ENCODE measurements at regions of chr3 and their contacts with region 1.

Region 1: GRCh38 chr3:197749601-197750395 is at the start of gene FYTTD1:
- DNase-seq: peak; percentile 85
- H3K4me3 Mint-ChIP-seq: peak within 1 kb of the TSS; percentile 97
- H3K27ac Mint-ChIP-seq: peak within 1 kb of the TSS; percentile 95
- H3K4me1 Mint-ChIP-seq: peaks cover 44% of the 10 kb centered on the region
- H3K27me3 Mint-ChIP-seq: peaks cover 13% of the 10 kb centered on the region
- total RNA-seq, gene FYTTD1: 59.0 and 77.2 TPM in 2 replicates

Region 2: GRCh38 chr3:197260491-197261163 is 489.2 kb before region 1 on chr3:
- intact Hi-C with region 1: no loop called
- DNase-seq: no peak
- H3K4me3 Mint-ChIP-seq: no peak overlapping the region
- H3K27ac Mint-ChIP-seq: no peak overlapping the region
- H3K4me1 Mint-ChIP-seq: peaks cover 14% of the 10 kb centered on the region
- H3K27me3 Mint-ChIP-seq: no peaks in the 10 kb centered on the region

Region 3: DNA sequence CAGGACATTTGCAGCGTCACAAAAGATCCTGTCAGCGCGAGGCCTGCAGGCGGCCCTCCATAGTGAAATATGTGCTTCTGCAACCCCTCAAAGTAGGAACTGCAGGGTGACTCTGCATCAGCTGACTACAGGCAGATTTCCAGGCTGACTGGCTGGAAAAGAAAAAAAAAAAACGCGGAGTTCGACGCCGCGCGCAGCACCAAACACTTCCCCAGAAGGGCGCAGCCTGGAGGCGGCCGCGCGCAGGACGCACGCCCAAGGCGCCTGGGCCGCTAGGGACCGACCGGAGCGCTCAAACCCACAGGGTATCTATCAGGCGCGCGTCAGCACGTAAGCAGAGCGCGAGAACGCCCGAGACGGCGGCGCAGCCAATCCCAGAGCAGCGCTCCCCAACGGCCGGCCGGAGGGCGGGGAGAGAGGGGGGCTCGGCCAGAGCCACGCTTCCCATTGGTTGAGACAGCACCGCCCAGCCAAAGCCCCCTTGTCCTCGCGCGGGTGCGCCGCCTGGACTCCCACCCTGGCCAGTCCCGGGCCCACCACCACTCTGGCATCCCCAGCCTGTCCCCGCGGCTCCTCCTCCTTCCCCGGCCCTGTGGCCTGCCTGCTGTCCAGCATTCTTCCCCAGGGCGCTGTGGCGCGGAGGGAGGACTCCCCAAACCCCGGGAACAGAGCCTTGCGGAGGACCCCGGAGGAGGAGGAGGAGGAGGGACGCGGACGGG is 195.1 kb before region 1 on chr3:
- intact Hi-C with region 1: loop called (anchors 1 kb)
- DNase-seq: peak; percentile 93
- H3K4me3 Mint-ChIP-seq: peak overlapping the region; percentile 93
- H3K27ac Mint-ChIP-seq: peak overlapping the region; percentile 97
- H3K4me1 Mint-ChIP-seq: peaks cover 39% of the 10 kb centered on the region
- H3K27me3 Mint-ChIP-seq: peaks cover 4% of the 10 kb centered on the region

Region 4: GRCh38 chr3:197736491-197737318 is 13.1 kb before region 1 on chr3 and contains the start of gene RUBCN:
- intact Hi-C with region 1: loop called (anchors 1 kb)
- DNase-seq: peak; percentile 94
- H3K4me3 Mint-ChIP-seq: peak within 1 kb of the TSS; percentile 90
- H3K27ac Mint-ChIP-seq: peak within 1 kb of the TSS; percentile 95
- H3K4me1 Mint-ChIP-seq: peaks cover 36% of the 10 kb centered on the region
- H3K27me3 Mint-ChIP-seq: peaks cover 4% of the 10 kb centered on the region
- total RNA-seq, gene RUBCN: 44.7 and 45.2 TPM in 2 replicates

Region 5: GRCh38 chr3:197761784-197762183 is 12.0 kb after region 1 on chr3:
- intact Hi-C with region 1: no loop called
- DNase-seq: no peak
- H3K4me3 Mint-ChIP-seq: no peak overlapping the region
- H3K27ac Mint-ChIP-seq: no peak overlapping the region
- H3K4me1 Mint-ChIP-seq: no peaks in the 10 kb centered on the region
- H3K27me3 Mint-ChIP-seq: no peaks in the 10 kb centered on the region

Region 6: DNA sequence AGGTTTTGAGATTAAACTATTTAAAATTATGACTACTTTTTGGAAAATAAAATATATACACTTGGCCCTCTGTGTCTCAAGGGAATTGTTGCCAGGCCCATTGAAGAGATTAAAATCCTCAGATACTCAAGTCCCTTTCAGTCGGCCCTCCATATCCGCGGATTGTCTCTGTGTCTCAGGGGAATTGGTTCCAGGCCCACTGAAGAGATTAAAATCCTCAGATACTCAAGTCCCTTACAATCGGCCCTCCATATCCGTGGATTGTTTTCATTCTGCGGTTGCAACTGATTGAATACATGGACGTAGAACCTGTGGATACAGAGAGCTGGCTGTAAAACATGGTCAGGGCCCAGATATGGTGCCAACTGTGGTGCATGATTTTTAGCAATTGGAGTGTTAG is 25.5 kb after region 1 on chr3:
- intact Hi-C with region 1: no loop called
- DNase-seq: no peak
- H3K4me3 Mint-ChIP-seq: no peak overlapping the region
- H3K27ac Mint-ChIP-seq: no peak overlapping the region
- H3K4me1 Mint-ChIP-seq: no peaks in the 10 kb centered on the region
- H3K27me3 Mint-ChIP-seq: no peaks in the 10 kb centered on the region

Region 7: DNA sequence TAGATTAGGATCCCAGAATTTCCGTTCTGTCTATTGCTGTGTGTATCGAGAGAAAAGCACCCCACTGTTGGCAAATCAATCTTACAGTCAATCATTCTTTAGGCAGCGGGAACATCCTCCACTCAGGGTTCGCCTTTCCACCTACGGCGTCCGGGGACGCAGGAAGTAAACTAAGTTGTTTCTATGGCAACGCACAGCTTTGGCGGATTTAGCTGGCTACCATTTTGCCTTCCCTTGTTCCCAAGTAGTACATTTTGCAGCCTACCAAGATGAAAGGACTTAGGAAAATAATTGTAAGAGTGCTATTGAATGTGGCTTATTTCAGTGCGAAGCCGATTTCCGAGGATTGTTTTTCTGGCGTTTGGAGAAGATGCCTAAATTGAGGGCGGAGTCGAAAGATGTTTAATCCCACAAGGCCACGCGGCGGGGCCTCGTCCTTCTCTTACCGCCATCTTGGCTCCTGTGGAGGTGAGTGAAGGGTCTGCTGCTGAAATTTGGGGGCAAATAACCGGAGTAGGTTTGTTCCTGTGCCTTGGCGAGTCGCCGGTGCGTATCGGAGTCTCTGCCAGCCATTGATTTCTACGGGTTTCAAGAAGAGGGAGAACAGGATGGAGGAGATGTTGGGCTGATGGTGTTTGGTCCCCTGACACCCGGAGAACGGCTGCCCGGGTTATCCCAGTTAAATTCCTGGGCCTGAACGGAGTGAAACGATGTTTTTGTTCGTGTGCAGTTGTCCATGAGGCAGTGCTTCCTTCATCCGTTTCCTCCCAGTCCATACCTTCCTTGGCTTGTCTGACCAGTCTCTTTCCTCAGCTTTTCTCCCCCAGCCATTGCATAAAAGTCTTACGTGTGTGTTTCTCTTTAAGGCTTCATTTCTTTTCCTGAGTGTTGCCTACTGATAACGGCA is 200.2 kb after region 1 on chr3 and contains the start of gene RPL35A:
- intact Hi-C with region 1: loop called (anchors 5 kb)
- DNase-seq: peak; percentile 79
- H3K4me3 Mint-ChIP-seq: peak within 1 kb of the TSS; percentile 99
- H3K27ac Mint-ChIP-seq: peak within 1 kb of the TSS; percentile 97
- H3K4me1 Mint-ChIP-seq: peaks cover 48% of the 10 kb centered on the region
- H3K27me3 Mint-ChIP-seq: no peaks in the 10 kb centered on the region
- total RNA-seq, gene RPL35A: 1,253 and 1,262 TPM in 2 replicates

Region 8: GRCh38 chr3:198071602-198072285 is 321.9 kb after region 1 on chr3:
- intact Hi-C with region 1: loop called (anchors 5 kb)
- DNase-seq: peak; percentile 20
- H3K4me3 Mint-ChIP-seq: no peak overlapping the region
- H3K27ac Mint-ChIP-seq: peak overlapping the region; percentile 85
- H3K4me1 Mint-ChIP-seq: peaks cover 27% of the 10 kb centered on the region
- H3K27me3 Mint-ChIP-seq: peaks cover 32% of the 10 kb centered on the region

Measured in activated T-helper 1 cell treated with anti-CD3 and anti-CD28 coated beads, Interleukin-12 subunit alpha, Interleukin-12 subunit beta, Interleukin-2, Interleukin-4 antibody, amounts not matched to agents 30 ng/mL and 10 ng/mL and 1 ng/mL, durations not matched to agents 14 hours and 24 hours and 36 hours (primary cell).